Right lobe of liver (tissue), 6 donors: ENCODE measurements at regions of chr3 and their contacts with region 1.

Region 1: GRCh38 chr3:186097663-186098451 is 11.0 kb downstream of the ETV5 start:
- DNase-seq: peak; percentile 55 to 85 (median 70)
- ATAC-seq: peak; percentile 93 to 97 (median 96)
- H3K4me3 ChIP-seq: peak overlapping the region; percentile 14 to 40 (median 35)
- H3K27ac ChIP-seq: peak overlapping the region in 2 of 3 donors; percentile 17 to 35
- H3K4me1 ChIP-seq: peaks cover 0 to 38% (median 4%) of the 10 kb centered on the region in 4 donors
- H3K27me3 ChIP-seq: no peaks in the 10 kb centered on the region
- CTCF ChIP-seq: no peak
- POLR2A ChIP-seq: no peak

Region 2: DNA sequence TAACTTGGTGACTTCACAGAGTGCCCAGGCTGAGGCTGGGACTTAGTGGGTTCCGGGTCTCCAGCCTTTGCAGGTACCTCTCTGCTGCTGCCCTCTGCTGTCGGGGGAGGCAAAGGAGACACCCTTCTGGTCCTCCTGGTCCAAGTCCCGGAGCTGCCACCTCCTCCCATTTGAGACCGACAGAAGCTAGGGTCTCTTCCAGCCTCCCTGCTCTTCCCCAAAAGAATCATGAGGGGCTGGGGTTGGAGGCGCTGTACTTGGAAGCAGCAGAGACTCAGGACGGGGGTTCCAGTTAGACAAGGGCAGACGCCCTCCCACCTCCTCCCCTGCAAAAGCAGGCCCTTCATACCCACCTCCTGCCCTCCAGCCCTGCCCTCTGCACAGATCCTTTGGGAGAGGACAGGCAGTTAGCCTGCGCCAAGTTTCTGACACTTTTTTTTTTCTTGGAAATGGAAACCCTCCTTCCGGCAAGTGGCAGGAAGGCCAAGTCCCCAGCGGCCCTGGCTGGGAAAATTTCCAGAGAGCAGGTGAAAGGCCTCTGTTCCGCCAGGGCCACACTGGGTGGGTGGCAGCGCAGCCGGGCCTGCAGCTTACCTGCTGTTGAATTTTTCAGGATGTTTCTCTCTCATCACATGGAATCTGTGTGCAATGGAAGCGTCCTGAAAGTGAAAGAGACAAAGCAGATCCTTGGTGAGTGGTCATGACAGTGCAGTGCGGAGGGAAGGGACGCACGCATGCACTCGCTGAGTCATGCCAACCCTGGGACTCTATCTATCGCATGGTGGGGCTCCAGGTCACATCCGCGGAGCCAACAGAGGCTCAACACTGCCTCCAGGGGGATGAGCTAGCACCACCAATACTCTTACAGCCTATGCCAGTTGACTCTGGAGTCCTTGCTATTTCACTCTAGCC is 144.3 kb after region 1 on chr3:
- intact Hi-C with region 1: loop called in 1 of 2 experiments (anchors 5 kb)
- DNase-seq: peak; percentile 75 to 84 (median 77)
- ATAC-seq: peak; percentile 92 to 94 (median 92)
- H3K4me3 ChIP-seq: peak overlapping the region in 2 of 3 donors; percentile 19 to 46
- H3K27ac ChIP-seq: no peak overlapping the region
- H3K4me1 ChIP-seq: peaks cover 0 to 5% (median 2%) of the 10 kb centered on the region in 4 donors
- H3K27me3 ChIP-seq: no peaks in the 10 kb centered on the region
- CTCF ChIP-seq: peak; percentile 57 to 71 (median 60)
- POLR2A ChIP-seq: no peak

Region 3: GRCh38 chr3:187223799-187224198 is 1125.9 kb after region 1 on chr3:
- intact Hi-C with region 1: no loop called
- DNase-seq: no peak
- ATAC-seq: peak; percentile 8 to 61 (median 22)
- H3K4me3 ChIP-seq: no peak overlapping the region
- H3K27ac ChIP-seq: peak overlapping the region; percentile 32 to 91 (median 85)
- H3K4me1 ChIP-seq: peaks cover 0 to 41% (median 14%) of the 10 kb centered on the region in 4 donors
- H3K27me3 ChIP-seq: no peaks in the 10 kb centered on the region
- CTCF ChIP-seq: no peak
- POLR2A ChIP-seq: no peak